IMR-90 (cell line): ENCODE measurements at regions of chr1 and their contacts with region 1.

Region 1: GRCh38 chr1:66503841-66504470 is 30.0 kb upstream of the SGIP1 start:
- DNase-seq: peak; percentile 81
- ATAC-seq: peak; percentile 87
- H3K4me3 ChIP-seq: no peak overlapping the region
- H3K27ac ChIP-seq: no peak overlapping the region
- H3K4me1 ChIP-seq: 0 out of 2 replicates have a peak, but pooled peaks cover 2% of the 10 kb centered on the region
- H3K27me3 ChIP-seq: no peaks in the 10 kb centered on the region
- CTCF ChIP-seq: peak; percentile 70
- POLR2A ChIP-seq: no peak
- RAD21 ChIP-seq: peak; percentile 86

Region 2: DNA sequence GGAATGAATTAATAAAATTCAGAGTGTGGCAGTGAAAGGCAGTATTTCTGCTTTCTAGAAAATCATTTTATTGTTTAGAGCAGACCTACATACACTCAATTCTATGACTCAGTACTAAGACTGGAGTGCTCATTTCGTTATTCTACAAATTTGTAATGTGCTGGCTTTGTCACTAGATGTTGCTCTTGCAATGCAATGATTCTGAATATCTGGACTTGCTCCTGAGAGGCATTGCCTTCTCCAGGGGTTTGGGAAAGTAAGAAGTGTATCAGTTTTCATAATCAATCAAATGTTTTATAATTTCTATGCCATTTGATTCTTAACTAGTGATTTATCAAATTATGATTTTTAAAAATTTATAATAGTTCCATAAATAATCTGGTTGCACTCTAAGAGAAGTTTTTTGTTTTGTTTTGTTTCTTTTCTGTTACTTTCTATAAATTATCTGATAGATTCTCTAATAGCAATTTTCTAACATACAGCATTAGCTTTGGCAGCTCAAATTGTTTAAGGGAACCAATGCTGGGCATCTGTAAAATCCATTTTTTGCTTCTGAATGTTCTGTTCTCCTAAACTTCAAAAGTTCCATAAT is 250.5 kb before region 1 on chr1:
- CTCF ChIA-PET with region 1: interaction called, 8 read pairs
- POLR2A ChIA-PET with region 1: no interaction called
- dilution Hi-C with region 1: no loop called
- in situ Hi-C with region 1: no loop called
- intact Hi-C with region 1: loop called (anchors 1 kb)
- DNase-seq: peak; percentile 85
- ATAC-seq: peak; percentile 96
- H3K4me3 ChIP-seq: no peak overlapping the region
- H3K27ac ChIP-seq: no peak overlapping the region
- H3K4me1 ChIP-seq: peaks cover 8% of the 10 kb centered on the region
- H3K27me3 ChIP-seq: no peaks in the 10 kb centered on the region
- CTCF ChIP-seq: peak; percentile 95
- POLR2A ChIP-seq: peak; percentile 45; the same call in 1 of the 2 replicates
- RAD21 ChIP-seq: peak; percentile 99

Region 3: DNA sequence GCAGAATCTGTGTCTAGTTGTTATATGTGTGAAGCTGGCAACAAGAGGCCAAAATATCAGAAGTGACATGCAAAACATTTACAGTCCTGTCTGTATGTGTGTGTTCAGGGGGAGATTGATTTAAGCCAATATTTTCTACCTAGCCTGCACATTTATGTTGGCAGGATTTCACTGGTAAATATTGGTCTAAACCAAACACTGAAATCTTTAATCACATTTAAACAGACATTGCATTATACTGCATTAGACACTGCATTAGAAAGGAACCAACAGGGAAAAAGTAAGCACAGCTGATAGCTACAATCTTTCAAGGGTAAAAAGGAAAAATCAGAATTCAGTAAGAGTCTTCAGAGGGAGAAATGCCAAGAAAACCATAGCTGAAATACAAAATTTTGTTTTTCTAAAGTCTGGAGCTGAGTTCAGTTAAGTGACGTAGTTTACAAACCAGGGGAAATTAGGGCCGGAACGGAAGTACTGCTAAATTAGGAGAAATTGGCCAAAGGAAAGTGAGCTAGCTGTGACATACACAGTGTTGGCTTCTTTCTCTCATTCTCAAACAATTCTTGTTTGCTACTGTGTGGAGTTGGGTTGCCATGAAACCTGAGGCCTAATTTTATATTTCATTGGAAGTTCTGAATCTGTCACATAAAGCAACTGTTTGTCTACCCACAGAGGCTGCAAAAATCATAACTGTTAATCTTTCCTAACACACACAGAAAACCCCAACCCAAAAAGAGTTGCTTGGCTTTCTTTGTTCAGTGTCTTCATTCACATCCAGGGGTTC is 187.3 kb before region 1 on chr1:
- CTCF ChIA-PET with region 1: no interaction called
- POLR2A ChIA-PET with region 1: no interaction called
- dilution Hi-C with region 1: no loop called
- in situ Hi-C with region 1: no loop called
- intact Hi-C with region 1: no loop called
- DNase-seq: peak; percentile 23
- ATAC-seq: no peak
- H3K4me3 ChIP-seq: no peak overlapping the region
- H3K27ac ChIP-seq: no peak overlapping the region
- H3K4me1 ChIP-seq: peaks cover 1% of the 10 kb centered on the region
- H3K27me3 ChIP-seq: no peaks in the 10 kb centered on the region
- CTCF ChIP-seq: no peak
- POLR2A ChIP-seq: no peak
- RAD21 ChIP-seq: no peak

Region 4: DNA sequence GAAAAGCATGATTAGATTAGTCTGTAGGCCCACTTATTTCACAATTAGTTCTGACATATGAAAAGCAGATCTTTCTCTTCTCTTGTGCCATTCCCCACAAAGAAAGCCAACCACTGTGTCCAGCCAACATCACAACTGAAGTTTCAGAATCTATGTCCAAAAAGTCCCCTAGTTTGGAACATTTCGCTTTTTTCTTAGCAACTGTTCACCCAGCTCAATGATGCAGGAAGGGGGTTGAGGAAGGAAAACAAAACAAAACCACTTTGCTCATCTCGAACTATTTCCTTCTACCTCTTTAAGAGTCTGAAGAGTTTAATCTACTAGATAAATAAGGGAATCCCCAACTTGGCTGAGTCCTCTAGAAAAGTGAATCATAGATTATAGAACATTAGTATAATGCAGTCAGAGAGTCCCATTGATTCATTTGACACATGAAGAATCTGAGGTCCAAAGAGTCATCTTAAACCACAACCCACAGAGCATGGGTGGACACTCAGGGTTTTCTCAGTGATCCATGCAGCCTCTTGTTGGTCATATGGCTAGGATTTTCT is 129.3 kb before region 1 on chr1:
- CTCF ChIA-PET with region 1: interaction called, 3 read pairs
- POLR2A ChIA-PET with region 1: no interaction called
- dilution Hi-C with region 1: no loop called
- in situ Hi-C with region 1: no loop called
- intact Hi-C with region 1: loop called (anchors 5 kb)
- DNase-seq: peak; percentile 95
- ATAC-seq: peak; percentile 66
- H3K4me3 ChIP-seq: no peak overlapping the region
- H3K27ac ChIP-seq: no peak overlapping the region
- H3K4me1 ChIP-seq: peaks cover 22% of the 10 kb centered on the region
- H3K27me3 ChIP-seq: no peaks in the 10 kb centered on the region
- CTCF ChIP-seq: no peak
- POLR2A ChIP-seq: no peak
- RAD21 ChIP-seq: no peak

Region 5: DNA sequence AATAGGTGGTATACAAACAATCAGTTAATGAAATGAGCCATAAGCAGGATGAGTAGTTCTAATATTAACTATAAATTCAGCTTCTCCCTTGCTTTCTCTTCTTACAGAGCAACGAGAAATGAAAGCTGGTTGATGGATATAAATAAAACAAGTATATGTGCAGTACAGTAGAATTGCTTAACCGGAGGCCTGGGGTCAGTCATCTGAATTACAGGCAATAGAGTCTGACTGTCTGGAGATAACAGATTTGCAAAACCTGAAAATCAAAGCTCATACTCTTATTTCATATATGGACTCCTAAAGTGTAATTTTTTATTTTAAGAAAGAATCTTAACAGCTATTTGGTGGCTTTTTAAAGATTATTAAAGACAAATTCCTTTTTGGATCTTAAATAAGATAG is 13.1 kb before region 1 on chr1:
- CTCF ChIA-PET with region 1: interaction called, 22 read pairs
- POLR2A ChIA-PET with region 1: no interaction called
- dilution Hi-C with region 1: no loop called
- in situ Hi-C with region 1: no loop called
- intact Hi-C with region 1: no loop called
- DNase-seq: peak; percentile 63
- ATAC-seq: peak; percentile 69
- H3K4me3 ChIP-seq: no peak overlapping the region
- H3K27ac ChIP-seq: no peak overlapping the region
- H3K4me1 ChIP-seq: peaks cover 13% of the 10 kb centered on the region; the same call in 1 of the 2 replicates
- H3K27me3 ChIP-seq: no peaks in the 10 kb centered on the region
- CTCF ChIP-seq: no peak
- POLR2A ChIP-seq: no peak
- RAD21 ChIP-seq: no peak

Region 6: DNA sequence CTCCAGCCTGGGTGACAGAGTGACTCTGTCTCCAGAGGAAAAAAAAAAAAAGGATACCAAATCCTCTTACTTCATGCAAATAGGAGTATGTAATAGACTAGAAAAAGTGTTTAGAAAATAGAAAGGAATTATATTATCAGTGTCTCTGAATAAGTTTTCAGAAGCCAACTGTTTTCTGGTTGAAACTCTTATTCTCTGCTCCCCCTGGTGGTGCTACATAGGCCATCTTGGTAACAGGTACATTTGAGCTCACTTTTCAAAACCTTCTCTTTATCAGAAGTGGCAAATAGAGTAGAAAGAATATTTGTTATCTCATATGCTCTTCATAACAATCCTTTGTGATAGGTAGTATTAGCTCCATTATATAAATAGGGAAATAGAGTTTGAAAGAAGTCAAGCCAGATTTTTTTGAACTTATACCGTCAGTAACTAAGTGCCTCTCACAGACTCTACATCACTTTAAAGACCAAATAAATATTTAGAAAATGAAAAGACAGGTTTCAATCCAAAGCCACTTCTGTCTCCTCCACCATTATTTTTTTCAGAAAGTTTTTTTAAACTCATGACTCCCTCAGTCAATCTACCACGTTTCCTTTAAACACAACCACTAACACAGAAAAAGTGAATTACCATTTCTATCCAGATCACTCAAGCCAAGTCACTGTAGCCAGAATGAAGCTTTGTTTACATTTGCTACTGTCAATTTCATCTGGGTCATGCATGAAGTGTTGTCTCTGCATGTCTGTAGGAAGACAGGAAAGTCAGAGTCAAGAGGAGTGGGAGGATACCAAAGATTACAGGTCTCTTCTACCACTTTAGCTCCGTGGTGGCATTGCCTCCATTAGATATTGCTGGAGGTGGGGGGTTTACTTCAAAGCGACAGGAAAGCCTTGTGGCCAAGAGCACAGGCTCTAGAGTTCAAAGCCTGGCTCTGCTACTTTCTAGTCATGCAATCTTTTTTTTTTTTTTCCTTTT is 707.9 kb after region 1 on chr1:
- CTCF ChIA-PET with region 1: no interaction called
- POLR2A ChIA-PET with region 1: no interaction called
- dilution Hi-C with region 1: no loop called
- in situ Hi-C with region 1: no loop called
- intact Hi-C with region 1: no loop called
- DNase-seq: peak; percentile 34
- ATAC-seq: peak; percentile 53; the same call in 1 of the 2 replicates
- H3K4me3 ChIP-seq: no peak overlapping the region
- H3K27ac ChIP-seq: no peak overlapping the region
- H3K4me1 ChIP-seq: no peaks in the 10 kb centered on the region
- H3K27me3 ChIP-seq: no peaks in the 10 kb centered on the region
- CTCF ChIP-seq: peak; percentile 56
- POLR2A ChIP-seq: no peak
- RAD21 ChIP-seq: peak; percentile 44